ENCODE measurements at regions of chr13 and their contacts with region 1.

Region 1: DNA sequence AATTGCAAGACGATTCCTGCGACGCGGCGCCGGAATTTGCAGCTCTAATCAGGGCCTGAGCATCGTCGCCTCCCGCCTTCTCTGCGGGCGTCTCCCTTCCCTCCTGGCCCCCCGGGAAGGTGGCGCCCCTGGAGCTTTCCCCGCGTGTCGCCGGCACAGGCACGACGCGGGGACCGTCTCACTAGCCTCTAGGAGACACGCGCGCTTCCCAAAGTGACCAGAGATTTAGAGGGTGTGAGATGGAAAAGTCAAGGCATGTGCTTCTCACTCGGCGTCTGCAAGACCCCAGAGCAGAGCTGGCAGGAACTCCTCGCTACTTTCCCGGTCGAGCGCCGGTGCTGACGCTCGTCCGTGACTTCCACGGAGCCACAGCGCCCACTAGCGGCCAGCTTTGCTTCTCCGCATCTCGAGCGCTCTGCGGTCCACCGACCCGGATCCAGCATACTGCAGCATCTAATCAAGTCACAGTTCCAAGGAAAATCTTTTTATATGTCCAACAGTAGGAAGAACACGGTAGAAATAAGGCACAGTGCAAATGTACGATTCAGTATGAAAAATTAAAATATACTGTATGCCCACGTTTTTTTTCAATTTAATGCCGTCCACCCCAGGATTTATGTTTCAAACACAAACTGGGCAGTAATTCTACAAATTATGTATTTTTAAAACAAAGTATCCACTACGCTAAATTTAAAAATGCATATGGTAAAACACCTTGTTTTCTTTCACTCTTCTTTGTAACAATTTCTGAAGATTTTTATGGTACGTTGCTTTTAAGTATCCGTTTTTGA is 977 bp upstream of the EFNB2 start:
- DNase-seq: peak; percentile 92 to 94
- ATAC-seq: peak; percentile 66 to 92 (median 86)
- H3K4me3 ChIP-seq: peak overlapping the region; percentile 59 to 87 (median 73)
- H3K27ac ChIP-seq: peak overlapping the region; percentile 47 to 88 (median 82)
- H3K4me1 ChIP-seq: peaks cover 0 to 47% (median 21%) of the 10 kb centered on the region in 9 donors
- H3K27me3 ChIP-seq: peaks cover 0 to 39% (median 0%) of the 10 kb centered on the region in 7 donors
- CTCF ChIP-seq: peak; percentile 93 to 99 (median 98)

Region 2: DNA sequence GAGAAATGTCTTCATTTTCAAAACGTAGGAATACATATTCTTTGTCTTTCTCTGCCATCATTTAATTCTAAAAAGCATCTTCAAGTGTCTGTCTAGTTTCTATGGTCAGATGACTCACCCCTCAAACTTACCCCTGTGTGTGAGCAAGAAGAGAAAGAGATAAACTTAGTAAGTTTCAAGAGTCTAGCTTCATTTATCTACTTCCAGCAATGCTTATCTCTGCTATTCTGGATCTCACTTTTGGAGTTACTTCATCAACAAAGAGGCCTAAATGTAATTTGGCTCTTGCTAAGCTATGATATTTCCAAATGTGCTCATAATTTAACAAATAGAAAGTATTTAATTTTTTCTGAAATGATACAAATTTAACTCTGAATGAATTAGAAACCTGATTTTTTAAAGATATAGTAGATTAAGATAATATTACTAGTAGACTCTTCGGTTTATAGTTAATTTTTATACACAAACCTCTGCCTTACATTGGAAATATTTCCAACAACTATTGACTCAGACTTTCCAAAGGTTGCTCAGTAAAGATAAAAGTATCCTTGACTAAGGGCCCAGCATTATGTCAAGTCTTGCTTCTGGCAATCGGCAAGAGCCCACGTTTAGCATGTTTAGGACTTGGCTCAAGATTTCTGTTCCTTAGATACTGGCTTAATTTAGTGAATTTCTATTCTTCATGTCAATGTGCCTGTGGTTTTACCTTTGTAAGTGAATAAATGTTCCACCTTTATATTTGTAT is 1959.2 kb before region 1 on chr13:
- intact Hi-C with region 1: loop called in 7 of 10 experiments (anchors 5 to 10 kb)
- DNase-seq: no peak
- ATAC-seq: no peak
- H3K4me3 ChIP-seq: no peak overlapping the region
- H3K27ac ChIP-seq: no peak overlapping the region
- H3K4me1 ChIP-seq: peaks cover 0 to 1% (median 0%) of the 10 kb centered on the region in 9 donors
- H3K27me3 ChIP-seq: peaks cover 0 to 4% (median 0%) of the 10 kb centered on the region in 7 donors
- CTCF ChIP-seq: no peak

Region 3: DNA sequence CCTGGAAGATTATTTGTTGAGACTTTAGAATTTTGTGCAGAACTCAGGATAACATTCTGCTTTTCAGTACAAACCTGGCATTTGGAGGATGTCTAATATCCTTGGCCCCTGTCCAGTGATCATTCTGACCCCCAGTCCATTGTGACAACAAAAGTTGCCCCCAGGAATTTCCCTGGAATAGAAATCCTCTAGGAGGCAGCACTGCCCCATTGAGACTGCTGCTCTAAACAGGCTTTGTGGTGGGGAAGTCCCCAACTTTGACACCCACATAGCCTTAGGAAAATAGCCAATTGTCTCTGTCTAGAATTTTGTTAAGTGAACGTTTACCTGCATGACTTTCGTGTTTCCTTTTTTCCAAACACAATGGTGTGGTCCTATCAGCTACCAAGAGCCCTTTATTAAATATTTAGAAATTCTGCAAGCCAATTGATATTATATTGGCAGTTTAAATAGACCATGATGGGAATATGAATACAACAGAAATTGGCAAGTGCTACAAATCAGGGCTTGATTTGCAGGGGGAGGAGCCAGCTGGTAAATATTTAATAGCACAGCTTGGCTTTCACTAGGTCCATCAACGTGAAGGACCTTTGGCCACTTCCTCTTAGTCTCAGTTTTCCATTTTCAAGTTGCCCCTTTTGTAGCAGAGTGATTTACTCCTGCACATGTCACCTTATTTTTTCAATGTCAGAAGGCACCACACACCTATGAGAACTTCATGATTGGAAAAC is 452.7 kb before region 1 on chr13:
- intact Hi-C with region 1: loop called in 7 of 10 experiments (anchors 5 to 10 kb)
- DNase-seq: peak in 1 of 2 donors; percentile 32
- ATAC-seq: peak in 4 of 8 donors; percentile 47 to 67 (median 60)
- H3K4me3 ChIP-seq: no peak overlapping the region
- H3K27ac ChIP-seq: no peak overlapping the region
- H3K4me1 ChIP-seq: no peaks in the 10 kb centered on the region
- H3K27me3 ChIP-seq: no peaks in the 10 kb centered on the region
- CTCF ChIP-seq: peak; percentile 23 to 76 (median 61)

Region 4: DNA sequence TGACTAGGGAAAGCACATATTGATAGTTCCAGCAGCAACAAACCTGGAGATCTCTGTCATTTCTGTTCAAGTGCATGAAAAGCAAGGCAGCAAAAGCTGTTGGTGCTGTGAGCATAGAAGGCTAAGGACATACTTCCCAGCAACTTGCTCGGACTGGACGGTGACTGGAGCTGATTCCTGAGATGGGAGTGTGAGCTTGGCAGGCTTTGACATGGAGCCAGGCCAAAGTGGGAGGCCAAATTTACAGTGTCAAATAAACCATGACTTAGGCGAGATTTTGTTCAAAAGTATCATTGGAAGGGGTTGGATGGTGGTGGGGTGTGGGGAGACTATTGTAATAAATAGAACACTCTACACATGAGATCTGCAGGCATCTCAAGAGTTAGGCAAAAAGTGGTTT is 37.4 kb after region 1 on chr13:
- intact Hi-C with region 1: no loop called
- DNase-seq: peak in 1 of 2 donors; percentile 32
- ATAC-seq: peak in 5 of 8 donors; percentile 29 to 59 (median 41)
- H3K4me3 ChIP-seq: no peak overlapping the region
- H3K27ac ChIP-seq: peak overlapping the region in 3 of 10 donors; percentile 3 to 45 (median 44)
- H3K4me1 ChIP-seq: peaks cover 0 to 18% (median 5%) of the 10 kb centered on the region in 9 donors
- H3K27me3 ChIP-seq: no peaks in the 10 kb centered on the region
- CTCF ChIP-seq: no peak

Region 5: GRCh38 chr13:106619688-106620555 is 83.5 kb after region 1 on chr13:
- intact Hi-C with region 1: loop called in 6 of 10 experiments (anchors 1 to 10 kb)
- DNase-seq: peak in 1 of 2 donors; percentile 53
- ATAC-seq: peak; percentile 79 to 94 (median 90)
- H3K4me3 ChIP-seq: peak overlapping the region in 7 of 10 donors; percentile 12 to 45 (median 34)
- H3K27ac ChIP-seq: peak overlapping the region in 5 of 10 donors; percentile 33 to 71 (median 48)
- H3K4me1 ChIP-seq: peaks cover 0 to 33% (median 10%) of the 10 kb centered on the region in 9 donors
- H3K27me3 ChIP-seq: peaks cover 0 to 36% (median 0%) of the 10 kb centered on the region in 7 donors
- CTCF ChIP-seq: peak; percentile 71 to 86 (median 81)

Region 6: DNA sequence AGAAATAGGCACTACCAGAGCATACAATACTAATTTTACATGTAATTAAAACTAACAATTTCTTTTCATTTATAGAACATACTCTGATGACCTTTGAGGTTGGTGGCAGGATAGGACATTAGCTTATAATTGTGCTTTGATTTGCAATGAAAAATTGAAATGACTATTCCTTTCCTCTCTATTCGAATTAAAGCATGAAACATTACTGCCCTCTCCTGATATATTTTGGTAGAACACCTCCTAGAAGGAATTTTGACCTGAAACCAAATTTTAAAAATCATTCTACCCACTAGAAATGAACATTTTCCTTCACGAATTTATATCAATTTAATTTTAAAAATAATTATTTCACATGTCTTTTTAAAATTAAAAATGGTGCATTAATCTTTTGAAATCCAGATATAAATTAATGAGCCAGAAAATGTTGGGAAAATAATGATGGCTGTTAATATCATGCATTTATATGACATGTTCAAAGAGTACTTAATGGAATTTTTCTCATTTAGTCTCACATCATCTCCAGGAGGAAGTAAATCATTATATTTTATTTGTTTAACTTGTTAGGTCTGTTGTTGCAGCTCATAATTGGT is 587.8 kb after region 1 on chr13:
- intact Hi-C with region 1: loop called in 6 of 10 experiments (anchors 5 to 10 kb)
- DNase-seq: no peak
- ATAC-seq: no peak
- H3K4me3 ChIP-seq: no peak overlapping the region
- H3K27ac ChIP-seq: no peak overlapping the region
- H3K4me1 ChIP-seq: peaks cover 0 to 6% (median 0%) of the 10 kb centered on the region in 9 donors
- H3K27me3 ChIP-seq: no peaks in the 10 kb centered on the region
- CTCF ChIP-seq: peak; percentile 54 to 88 (median 66)